A549 (cell line): ENCODE measurements at regions of chr11 and their contacts with region 1.

Region 1: DNA sequence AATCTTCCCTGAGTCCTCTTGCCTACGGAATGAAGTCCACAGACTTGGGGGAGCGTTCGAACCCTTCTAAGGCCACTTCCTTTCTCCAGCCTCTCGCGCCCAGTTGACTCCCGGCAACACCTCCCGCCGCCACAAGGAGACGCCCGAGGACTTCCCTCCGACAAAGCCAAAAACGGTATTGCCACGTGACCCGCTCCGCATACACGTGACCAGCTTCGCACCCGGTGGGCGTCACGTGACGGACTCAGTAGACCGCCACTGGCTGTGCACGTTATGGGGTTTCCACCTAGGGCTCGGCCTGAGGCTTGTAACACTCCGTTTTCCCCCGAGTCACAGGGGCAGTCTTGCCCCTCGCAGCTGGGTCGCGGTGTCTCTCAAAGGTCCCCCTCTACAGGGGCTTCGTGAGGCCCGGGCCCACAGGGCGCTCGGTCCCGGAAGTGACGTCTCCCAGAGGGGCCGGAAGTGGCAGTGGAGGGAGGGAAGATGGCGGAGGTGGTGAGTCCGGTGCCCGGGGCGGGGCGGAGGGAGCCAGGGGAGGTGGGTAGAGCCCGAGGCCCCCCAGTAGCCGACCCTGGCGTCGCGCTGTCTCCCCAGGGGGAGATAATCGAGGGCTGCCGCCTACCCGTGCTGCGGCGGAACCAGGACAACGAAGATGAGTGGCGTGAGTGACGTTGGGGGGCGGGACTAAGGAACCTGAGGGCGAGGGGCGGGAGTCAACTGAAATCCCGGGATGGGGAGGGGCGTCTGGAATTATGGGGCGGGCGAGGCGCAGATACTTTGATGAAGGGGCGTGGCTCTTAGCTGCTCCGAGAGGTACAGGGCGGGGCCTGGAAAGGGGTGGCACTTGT is at the start of gene KAT5:
- DNase-seq: peak; percentile 93 to 99
- ATAC-seq: peak; percentile 88 to 92
- H3K4me3 ChIP-seq: peak within 1 kb of the TSS; percentile 60
- H3K27ac ChIP-seq: peak within 1 kb of the TSS; percentile 97 to 99
- H3K4me1 ChIP-seq: peaks cover 15% of the 10 kb centered on the region
- CTCF ChIP-seq: peak; percentile 94
- EP300 ChIP-seq: no peak
- POLR2A ChIP-seq: peak; percentile 33; the same call in 1 of the 2 replicates
- RAD21 ChIP-seq: peak; percentile 93 to 94
- polyA plus RNA-seq, gene KAT5: 25.8 and 34.6 TPM in 2 replicates

Region 2: DNA sequence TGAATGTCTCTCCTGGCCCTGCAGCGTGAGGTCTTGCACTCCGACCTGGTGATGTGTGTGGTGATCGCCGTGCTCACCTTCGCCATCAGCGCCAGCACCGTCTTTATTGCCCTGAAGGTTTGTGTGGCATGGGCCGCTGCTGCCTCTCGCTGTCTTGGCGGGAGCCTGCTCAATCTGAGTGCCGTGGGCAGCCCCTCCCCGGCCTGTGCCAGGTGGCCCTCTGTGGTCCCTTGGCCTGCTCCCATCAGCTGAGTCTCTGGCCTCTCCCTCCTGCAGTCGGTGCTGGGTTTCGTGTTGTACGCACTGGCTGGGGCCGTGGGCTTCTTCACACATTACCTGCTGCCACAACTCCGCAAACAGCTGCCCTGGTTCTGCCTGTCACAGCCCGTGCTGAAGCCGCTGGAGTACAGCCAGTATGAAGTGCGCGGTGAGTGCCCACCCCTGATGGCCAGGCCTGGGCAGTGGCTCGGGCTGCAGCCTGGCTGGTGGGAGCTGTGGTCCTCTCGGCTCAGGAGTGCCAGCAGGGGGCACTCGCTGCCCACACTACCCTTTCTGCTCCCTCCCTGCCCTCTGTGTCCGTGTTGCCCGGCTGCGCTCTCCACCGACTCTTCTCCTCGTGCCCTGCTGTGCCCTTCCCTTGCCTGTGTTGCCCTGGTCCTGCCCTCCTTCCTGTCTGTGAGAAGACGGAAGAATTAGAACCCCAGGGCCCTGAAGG is 86.2 kb before region 1 on chr11:
- CTCF ChIA-PET with region 1: interaction called, 10 read pairs
- POLR2A ChIA-PET with region 1: no interaction called
- DNase-seq: peak; percentile 61 to 69
- ATAC-seq: peak; percentile 82 to 92
- H3K4me3 ChIP-seq: no peak overlapping the region
- H3K27ac ChIP-seq: no peak overlapping the region
- H3K4me1 ChIP-seq: no peaks in the 10 kb centered on the region
- CTCF ChIP-seq: peak; percentile 62
- EP300 ChIP-seq: no peak
- POLR2A ChIP-seq: no peak
- RAD21 ChIP-seq: peak; percentile 65 to 68

Region 3: GRCh38 chr11:65743928-65744698 is 32.1 kb after region 1 on chr11:
- CTCF ChIA-PET with region 1: interaction called, 11 read pairs
- POLR2A ChIA-PET with region 1: no interaction called
- DNase-seq: peak; percentile 49 to 76
- ATAC-seq: peak; percentile 95 to 99
- H3K4me3 ChIP-seq: no peak overlapping the region
- H3K27ac ChIP-seq: no peak overlapping the region
- H3K4me1 ChIP-seq: no peaks in the 10 kb centered on the region
- CTCF ChIP-seq: peak; percentile 40; the same call in 1 of the 3 replicates
- EP300 ChIP-seq: no peak
- POLR2A ChIP-seq: no peak
- RAD21 ChIP-seq: peak; percentile 55 to 73

Region 4: GRCh38 chr11:65802841-65803240 is 90.8 kb after region 1 on chr11:
- CTCF ChIA-PET with region 1: interaction called, 17 read pairs
- POLR2A ChIA-PET with region 1: no interaction called
- DNase-seq: no peak
- ATAC-seq: no peak
- H3K4me3 ChIP-seq: no peak overlapping the region
- H3K27ac ChIP-seq: no peak overlapping the region
- H3K4me1 ChIP-seq: no peaks in the 10 kb centered on the region
- CTCF ChIP-seq: no peak
- EP300 ChIP-seq: no peak
- POLR2A ChIP-seq: no peak
- RAD21 ChIP-seq: no peak

Region 5: DNA sequence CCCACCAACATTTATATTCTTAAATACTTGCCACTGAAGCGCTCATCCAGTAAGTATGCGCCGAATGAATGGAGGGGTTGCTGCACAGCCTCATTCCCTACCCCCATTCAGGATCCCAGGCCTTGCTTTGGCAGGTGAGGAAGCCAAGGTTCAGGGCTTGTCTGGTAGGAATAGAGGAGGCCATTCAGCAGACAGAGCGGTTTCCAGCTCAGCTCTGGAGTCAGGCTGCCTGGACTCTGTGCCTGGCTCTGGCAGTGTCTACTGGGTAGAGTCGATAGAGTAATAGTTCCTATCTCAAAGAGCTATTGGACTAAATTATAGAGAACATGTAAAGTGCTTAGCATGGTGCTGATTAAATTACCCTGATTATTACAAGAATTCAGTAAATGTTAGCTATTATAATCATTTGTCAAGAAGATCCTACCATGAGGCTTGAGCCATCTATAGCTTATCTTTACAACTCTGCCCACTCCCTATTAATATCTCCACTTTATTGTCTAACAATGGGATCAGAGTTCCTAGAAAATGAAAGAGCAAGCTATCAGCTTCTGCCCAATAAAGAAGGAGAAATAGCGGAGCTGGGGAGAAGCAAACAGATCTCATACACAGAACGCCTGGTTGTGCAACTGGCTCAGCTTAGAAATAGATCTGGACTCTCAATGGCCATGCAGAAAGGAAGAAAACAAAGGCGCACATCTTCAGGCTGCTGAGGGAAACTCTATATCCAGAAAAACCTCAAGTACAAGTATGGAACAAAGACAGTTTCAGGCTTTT is 115.1 kb after region 1 on chr11:
- CTCF ChIA-PET with region 1: interaction called, 222 read pairs
- POLR2A ChIA-PET with region 1: interaction called, 8 read pairs
- DNase-seq: no peak
- ATAC-seq: no peak
- H3K4me3 ChIP-seq: no peak overlapping the region
- H3K27ac ChIP-seq: no peak overlapping the region
- H3K4me1 ChIP-seq: no peaks in the 10 kb centered on the region
- CTCF ChIP-seq: no peak
- EP300 ChIP-seq: no peak
- POLR2A ChIP-seq: no peak
- RAD21 ChIP-seq: no peak

Region 6: DNA sequence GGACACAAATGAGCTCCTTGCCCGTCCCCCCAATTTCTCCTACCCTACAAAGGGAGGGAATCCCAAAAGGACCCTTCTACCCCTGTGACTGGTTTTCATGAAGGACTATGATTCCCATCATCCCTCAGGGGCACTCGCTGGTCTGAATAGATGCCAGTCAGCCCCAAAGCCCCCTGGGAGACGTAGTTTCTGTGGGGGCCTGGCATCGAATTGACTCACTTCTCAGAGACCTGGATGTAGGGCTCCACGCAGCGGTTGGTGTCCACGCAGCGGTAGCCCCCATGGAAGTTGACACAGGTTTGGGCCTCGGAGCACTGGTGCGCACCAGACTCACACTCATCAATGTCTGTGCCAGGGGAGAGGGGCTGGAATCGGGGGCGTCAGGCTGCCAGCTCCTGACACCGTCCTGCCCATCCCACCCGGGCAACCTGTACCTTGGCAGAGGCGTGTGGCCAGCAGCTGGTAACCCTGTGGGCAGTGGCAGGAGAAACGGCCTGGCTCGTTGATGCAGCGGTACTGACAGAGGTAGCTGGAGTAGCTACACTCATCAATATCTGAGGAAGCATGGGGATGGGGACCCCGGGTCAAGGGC is 156.2 kb after region 1 on chr11:
- CTCF ChIA-PET with region 1: interaction called, 12 read pairs
- POLR2A ChIA-PET with region 1: interaction called, 6 read pairs
- DNase-seq: no peak
- ATAC-seq: 0 out of 6 replicates have a peak, but pooled peaks of 1 of the 2 experiments have one; percentile 4
- H3K4me3 ChIP-seq: no peak overlapping the region
- H3K27ac ChIP-seq: no peak overlapping the region
- H3K4me1 ChIP-seq: peaks cover 6% of the 10 kb centered on the region
- CTCF ChIP-seq: no peak
- EP300 ChIP-seq: no peak
- POLR2A ChIP-seq: no peak
- RAD21 ChIP-seq: no peak